Caco-2 (cell line): ENCODE measurements at regions of chr18 and their contacts with region 1.

Region 1: DNA sequence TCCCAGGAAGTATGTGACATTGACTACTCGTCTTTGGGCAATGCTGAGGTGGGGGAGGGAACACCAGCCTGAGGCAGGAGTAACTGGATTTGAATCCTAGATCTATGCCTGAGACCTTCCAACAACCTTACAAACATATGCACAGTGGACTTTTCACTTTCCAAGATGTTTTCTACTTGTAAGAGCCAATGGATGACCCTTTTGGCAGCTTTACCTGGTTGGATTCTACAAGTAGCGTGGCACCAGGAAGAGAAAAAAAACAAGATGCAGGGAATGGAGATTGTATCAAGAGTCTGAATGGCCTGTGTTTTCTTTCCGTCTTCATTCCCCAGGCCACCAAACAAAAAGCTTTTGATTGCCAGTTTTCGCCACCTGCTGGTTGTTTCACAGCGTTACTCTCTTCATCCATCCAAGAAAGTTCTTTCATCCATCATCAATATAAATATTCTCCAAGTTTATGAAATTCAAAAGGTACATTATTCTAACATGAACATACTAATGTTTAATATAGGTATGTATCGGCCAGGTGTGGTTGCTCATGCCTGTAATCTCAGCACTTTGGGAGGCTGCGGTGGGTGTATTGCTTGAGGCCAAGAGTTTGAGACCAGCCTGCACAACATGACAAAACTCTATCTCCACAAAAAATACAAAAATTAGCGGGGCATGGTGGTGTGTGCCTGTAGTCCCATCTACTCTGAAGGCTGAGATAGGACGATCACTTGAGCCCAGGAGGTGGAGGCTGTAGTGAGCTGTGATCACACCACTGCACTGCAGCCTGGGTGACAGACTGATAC is 3.5 kb upstream of the BCL2 start:
- DNase-seq: peak; percentile 31 to 37
- H3K4me3 ChIP-seq: no peak overlapping the region
- H3K4me3 Mint-ChIP-seq: no peak overlapping the region
- H3K27ac Mint-ChIP-seq: no peak overlapping the region
- H3K4me1 ChIP-seq: 0 out of 2 replicates have a peak, but pooled peaks cover 5% of the 10 kb centered on the region
- H3K4me1 Mint-ChIP-seq: peaks cover 7% of the 10 kb centered on the region
- H3K27me3 ChIP-seq: no peaks in the 10 kb centered on the region
- H3K27me3 Mint-ChIP-seq: no peaks in the 10 kb centered on the region
- CTCF ChIP-seq: peak; percentile 20 to 46

Region 2: DNA sequence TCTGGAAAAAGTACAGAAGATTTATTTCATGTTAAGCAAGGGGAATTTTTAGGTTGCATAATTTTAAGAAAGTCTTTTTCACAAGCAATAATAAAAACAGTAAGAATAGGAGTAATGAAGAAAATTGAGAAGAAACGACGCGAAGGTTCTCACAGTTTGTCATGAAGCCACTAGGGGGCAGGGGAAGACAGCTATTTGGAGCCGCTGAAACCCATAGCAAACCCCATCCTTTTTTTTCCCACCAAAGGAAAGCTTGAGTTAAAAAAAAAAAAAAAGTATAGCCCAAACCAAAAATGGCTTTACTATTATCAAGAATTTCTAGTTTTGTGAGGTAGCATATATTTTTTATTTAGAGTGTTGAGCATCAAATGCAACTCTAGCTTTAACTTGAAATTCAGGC is 306.8 kb before region 1 on chr18:
- CTCF ChIA-PET with region 1: interaction called, 6 read pairs
- POLR2A ChIA-PET with region 1: no interaction called
- intact Hi-C with region 1: loop called (anchors 1 kb)
- DNase-seq: peak in 1 of 2 experiments; percentile 40
- H3K4me3 ChIP-seq: no peak overlapping the region
- H3K4me3 Mint-ChIP-seq: no peak overlapping the region
- H3K27ac Mint-ChIP-seq: no peak overlapping the region
- H3K4me1 ChIP-seq: no peaks in the 10 kb centered on the region
- H3K4me1 Mint-ChIP-seq: no peaks in the 10 kb centered on the region
- H3K27me3 ChIP-seq: no peaks in the 10 kb centered on the region
- H3K27me3 Mint-ChIP-seq: no peaks in the 10 kb centered on the region
- CTCF ChIP-seq: peak; percentile 40 to 60

Region 3: GRCh38 chr18:63119647-63120046 is 203.4 kb before region 1 on chr18:
- CTCF ChIA-PET with region 1: interaction called, 4 read pairs
- POLR2A ChIA-PET with region 1: no interaction called
- intact Hi-C with region 1: loop called (anchors 1 kb)
- DNase-seq: peak in 1 of 2 experiments; percentile 40
- H3K4me3 ChIP-seq: no peak overlapping the region
- H3K4me3 Mint-ChIP-seq: no peak overlapping the region
- H3K27ac Mint-ChIP-seq: no peak overlapping the region
- H3K4me1 ChIP-seq: no peaks in the 10 kb centered on the region
- H3K4me1 Mint-ChIP-seq: no peaks in the 10 kb centered on the region
- H3K27me3 ChIP-seq: no peaks in the 10 kb centered on the region
- H3K27me3 Mint-ChIP-seq: no peaks in the 10 kb centered on the region
- CTCF ChIP-seq: peak; percentile 20 to 52

Region 4: GRCh38 chr18:63131106-63131958 is 191.7 kb before region 1 on chr18:
- CTCF ChIA-PET with region 1: no interaction called
- POLR2A ChIA-PET with region 1: no interaction called
- intact Hi-C with region 1: loop called (anchors 2 kb)
- DNase-seq: no peak
- H3K4me3 ChIP-seq: no peak overlapping the region
- H3K4me3 Mint-ChIP-seq: no peak overlapping the region
- H3K27ac Mint-ChIP-seq: no peak overlapping the region
- H3K4me1 ChIP-seq: peaks cover 14% of the 10 kb centered on the region
- H3K4me1 Mint-ChIP-seq: peaks cover 9% of the 10 kb centered on the region
- H3K27me3 ChIP-seq: no peaks in the 10 kb centered on the region
- H3K27me3 Mint-ChIP-seq: no peaks in the 10 kb centered on the region
- CTCF ChIP-seq: peak; percentile 9 to 10